GM12878 (cell line): ENCODE measurements at regions of chr18 and their contacts with region 1.

Region 1: DNA sequence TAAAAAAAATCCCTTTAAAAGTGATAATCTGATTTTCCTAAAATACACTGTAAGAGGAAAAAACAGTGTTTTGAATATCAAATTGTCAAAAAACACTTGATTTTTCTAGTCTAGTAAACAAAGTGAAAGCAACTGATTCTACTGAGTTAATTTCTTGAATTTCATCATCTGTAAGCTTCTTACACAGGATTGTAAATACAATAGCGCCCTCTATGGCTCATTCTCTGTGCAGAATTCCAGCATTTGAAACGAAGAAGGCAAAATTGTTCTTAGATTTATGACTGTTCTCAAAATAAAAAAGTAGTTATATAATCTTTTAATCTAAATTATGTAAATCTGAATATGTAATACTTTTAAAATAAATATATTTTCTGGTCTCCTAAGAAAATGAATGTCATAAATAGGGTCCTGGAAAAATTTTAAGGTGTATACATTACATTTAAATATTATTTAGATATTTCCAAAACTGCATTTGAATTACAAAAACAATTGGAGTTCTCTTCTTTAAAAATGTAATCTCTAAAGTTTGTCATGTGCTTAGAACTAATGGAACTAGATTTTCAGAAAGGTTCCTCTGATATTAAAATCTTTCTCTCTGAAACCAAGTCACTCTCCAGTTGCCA is 176.9 kb upstream of the MC4R start:
- DNase-seq: no peak
- ATAC-seq: peak; percentile 67
- H3K4me3 ChIP-seq: no peak overlapping the region
- H3K27ac ChIP-seq: no peak overlapping the region
- H3K4me1 ChIP-seq: no peaks in the 10 kb centered on the region
- H3K27me3 ChIP-seq: no peaks in the 10 kb centered on the region
- CTCF ChIP-seq: peak; percentile 57 to 82 (median 66)
- EP300 ChIP-seq: no peak
- POLR2A ChIP-seq: no peak
- RAD21 ChIP-seq: peak; percentile 88

Region 2: DNA sequence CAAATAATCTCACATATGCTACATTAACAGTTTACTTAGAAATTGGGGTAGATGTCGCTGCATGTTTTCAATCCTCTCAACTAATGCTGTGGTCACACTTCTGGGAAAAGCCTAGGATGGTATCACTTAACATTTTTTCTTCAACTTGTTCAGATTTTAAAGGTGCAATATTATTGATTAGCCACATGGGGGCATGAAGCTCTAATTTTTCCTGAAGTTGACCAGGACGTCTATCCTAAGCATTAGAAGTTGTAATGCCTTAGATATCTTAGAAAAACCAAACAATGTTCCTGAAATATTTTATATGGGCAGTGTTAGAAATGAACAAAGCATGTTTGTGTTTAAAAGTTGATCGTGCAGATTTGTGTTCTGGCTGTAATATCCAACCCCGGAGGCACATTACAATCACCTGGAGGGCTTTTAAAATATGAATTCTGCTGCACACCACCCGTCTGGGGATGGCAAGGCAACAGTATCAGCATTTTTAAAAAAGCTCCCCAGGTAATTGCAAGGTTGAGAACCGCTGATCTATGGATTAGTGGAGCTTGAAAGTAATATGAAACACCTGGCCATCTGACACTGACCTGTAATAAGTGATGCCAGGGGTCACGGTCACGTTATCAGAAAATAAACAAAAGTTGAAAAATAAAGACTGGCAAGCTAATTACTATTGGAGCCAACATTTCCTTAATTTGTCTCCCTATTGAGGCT is 1089.9 kb before region 1 on chr18:
- CTCF ChIA-PET with region 1: interaction called, 14 read pairs
- POLR2A ChIA-PET with region 1: no interaction called
- RAD21 ChIA-PET with region 1: interaction called, 4 read pairs
- SMC1A ChIA-PET with region 1: no interaction called
- in situ Hi-C with region 1: loop called (anchors 25 kb)
- intact Hi-C with region 1: loop called (anchors 5 kb)
- DNase-seq: no peak
- ATAC-seq: peak; percentile 48; the same call in 2 of the 3 replicates
- H3K4me3 ChIP-seq: no peak overlapping the region
- H3K27ac ChIP-seq: no peak overlapping the region
- H3K4me1 ChIP-seq: no peaks in the 10 kb centered on the region
- H3K27me3 ChIP-seq: peaks cover 4 to 9% of the 10 kb centered on the region in 2 experiments; a peak in 3 of 4 replicates
- CTCF ChIP-seq: peak; percentile 53 to 58 (median 55)
- EP300 ChIP-seq: no peak
- POLR2A ChIP-seq: no peak
- RAD21 ChIP-seq: peak; percentile 66

Region 3: GRCh38 chr18:59631583-59632181 is 917.8 kb before region 1 on chr18:
- CTCF ChIA-PET with region 1: interaction called, 6 read pairs
- POLR2A ChIA-PET with region 1: no interaction called
- RAD21 ChIA-PET with region 1: no interaction called
- SMC1A ChIA-PET with region 1: no interaction called
- in situ Hi-C with region 1: no loop called
- intact Hi-C with region 1: loop called (anchors 5 kb)
- DNase-seq: no peak
- ATAC-seq: peak; percentile 66
- H3K4me3 ChIP-seq: no peak overlapping the region
- H3K27ac ChIP-seq: no peak overlapping the region
- H3K4me1 ChIP-seq: no peaks in the 10 kb centered on the region
- H3K27me3 ChIP-seq: no peaks in the 10 kb centered on the region; a peak in 3 of 4 replicates
- CTCF ChIP-seq: peak; percentile 53 to 65 (median 61)
- EP300 ChIP-seq: no peak
- POLR2A ChIP-seq: no peak
- RAD21 ChIP-seq: peak; percentile 52

Region 4: GRCh38 chr18:59783138-59783537 is 766.3 kb before region 1 on chr18:
- CTCF ChIA-PET with region 1: interaction called, 6 read pairs
- POLR2A ChIA-PET with region 1: no interaction called
- RAD21 ChIA-PET with region 1: interaction called, 5 read pairs
- SMC1A ChIA-PET with region 1: interaction called, 5 read pairs
- in situ Hi-C with region 1: no loop called
- intact Hi-C with region 1: loop called (anchors 5 kb)
- DNase-seq: peak; percentile 9
- ATAC-seq: peak; percentile 98
- H3K4me3 ChIP-seq: no peak overlapping the region
- H3K27ac ChIP-seq: no peak overlapping the region
- H3K4me1 ChIP-seq: no peaks in the 10 kb centered on the region
- H3K27me3 ChIP-seq: no peaks in the 10 kb centered on the region
- CTCF ChIP-seq: peak; percentile 63 to 71 (median 71); a peak in 5 of 6 replicates
- EP300 ChIP-seq: no peak
- POLR2A ChIP-seq: no peak
- RAD21 ChIP-seq: peak; percentile 81

Region 5: GRCh38 chr18:60506682-60507081 is 42.8 kb before region 1 on chr18:
- CTCF ChIA-PET with region 1: no interaction called
- POLR2A ChIA-PET with region 1: no interaction called
- RAD21 ChIA-PET with region 1: no interaction called
- SMC1A ChIA-PET with region 1: no interaction called
- in situ Hi-C with region 1: no loop called
- intact Hi-C with region 1: no loop called
- DNase-seq: no peak
- ATAC-seq: no peak
- H3K4me3 ChIP-seq: no peak overlapping the region
- H3K27ac ChIP-seq: no peak overlapping the region
- H3K4me1 ChIP-seq: no peaks in the 10 kb centered on the region
- H3K27me3 ChIP-seq: no peaks in the 10 kb centered on the region; a peak in 1 of 4 replicates
- CTCF ChIP-seq: no peak
- EP300 ChIP-seq: no peak
- POLR2A ChIP-seq: no peak
- RAD21 ChIP-seq: no peak

Region 6: DNA sequence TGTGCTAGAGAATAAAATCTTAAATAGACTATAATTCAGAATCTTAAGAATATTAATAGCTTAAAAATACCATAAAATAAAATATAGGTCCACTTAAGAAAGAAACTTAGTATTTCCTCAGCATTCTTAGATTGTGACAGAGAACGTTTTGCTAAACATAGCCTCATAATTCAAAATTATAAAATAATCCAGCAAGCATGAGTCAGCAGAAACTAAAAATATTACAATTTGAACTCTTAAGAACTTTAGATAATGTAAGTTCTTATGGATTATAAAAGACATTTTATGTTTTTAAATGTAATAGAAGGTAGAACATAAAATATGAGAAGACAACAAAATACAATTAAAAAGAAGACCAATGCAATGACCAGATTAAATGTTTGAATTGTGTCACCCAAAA is 12.4 kb before region 1 on chr18:
- CTCF ChIA-PET with region 1: interaction called, 15 read pairs
- POLR2A ChIA-PET with region 1: no interaction called
- RAD21 ChIA-PET with region 1: no interaction called
- SMC1A ChIA-PET with region 1: interaction called, 3 read pairs
- in situ Hi-C with region 1: no loop called
- intact Hi-C with region 1: no loop called
- DNase-seq: no peak
- ATAC-seq: no peak
- H3K4me3 ChIP-seq: no peak overlapping the region
- H3K27ac ChIP-seq: no peak overlapping the region
- H3K4me1 ChIP-seq: no peaks in the 10 kb centered on the region
- H3K27me3 ChIP-seq: no peaks in the 10 kb centered on the region
- CTCF ChIP-seq: no peak
- EP300 ChIP-seq: no peak
- POLR2A ChIP-seq: no peak
- RAD21 ChIP-seq: no peak